HepG2 (cell line): ENCODE measurements at regions of chr1 and their contacts with region 1.

Region 1: DNA sequence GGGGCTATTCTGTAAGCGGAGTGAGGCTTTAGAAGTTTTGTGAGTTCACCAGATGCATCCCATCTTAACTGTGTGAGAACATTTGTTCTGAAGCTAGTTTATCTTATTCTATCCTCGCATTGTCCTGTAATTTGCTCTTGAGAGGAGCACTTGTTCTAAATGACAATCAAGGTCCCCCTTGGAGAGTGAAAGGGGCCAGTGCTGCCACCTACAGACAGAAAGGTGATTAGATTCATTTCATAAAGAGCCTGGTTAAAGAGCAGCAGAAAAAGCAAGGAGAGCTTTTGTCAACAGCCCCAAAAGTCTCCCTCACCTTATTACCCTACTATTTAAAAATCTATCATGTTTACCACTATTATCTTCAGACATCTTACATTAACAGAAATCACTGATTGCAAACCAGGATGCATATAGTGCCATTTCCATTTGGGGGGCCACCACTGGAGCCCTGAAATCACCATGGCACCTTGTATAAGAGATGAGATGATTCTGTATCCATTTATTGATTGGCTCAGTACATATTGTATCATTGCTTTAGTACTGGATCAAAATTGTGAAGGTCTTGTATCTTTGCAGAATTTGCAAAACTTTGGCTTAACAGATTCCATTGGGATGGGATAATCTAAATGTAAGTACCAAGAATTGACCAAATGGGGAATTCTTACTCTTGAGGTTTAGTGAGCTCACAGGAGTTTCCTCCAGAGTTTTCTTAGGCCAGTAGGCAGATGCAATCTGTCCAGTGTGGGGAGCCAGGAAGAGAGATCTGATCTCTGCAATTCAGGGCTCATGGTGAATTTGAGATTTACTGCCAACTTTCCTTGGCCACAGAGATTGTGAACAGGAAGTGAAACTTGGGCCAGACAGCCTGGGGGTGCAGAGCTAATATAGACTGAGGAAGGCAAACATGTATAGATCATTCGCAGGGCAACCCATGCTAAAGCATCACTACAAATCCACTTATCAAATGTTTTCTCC is 64.3 kb upstream of the TRABD2B start:
- DNase-seq: peak; percentile 40
- ATAC-seq: peak; percentile 74
- H3K4me3 ChIP-seq: no peak overlapping the region
- H3K27ac ChIP-seq: no peak overlapping the region
- H3K4me1 ChIP-seq: no peaks in the 10 kb centered on the region
- H3K27me3 ChIP-seq: no peaks in the 10 kb centered on the region
- CTCF ChIP-seq: peak; percentile 74
- EP300 ChIP-seq: no peak
- POLR2A ChIP-seq: no peak
- RAD21 ChIP-seq: 0 out of 2 replicates have a peak, but pooled peaks have one; percentile 22

Region 2: DNA sequence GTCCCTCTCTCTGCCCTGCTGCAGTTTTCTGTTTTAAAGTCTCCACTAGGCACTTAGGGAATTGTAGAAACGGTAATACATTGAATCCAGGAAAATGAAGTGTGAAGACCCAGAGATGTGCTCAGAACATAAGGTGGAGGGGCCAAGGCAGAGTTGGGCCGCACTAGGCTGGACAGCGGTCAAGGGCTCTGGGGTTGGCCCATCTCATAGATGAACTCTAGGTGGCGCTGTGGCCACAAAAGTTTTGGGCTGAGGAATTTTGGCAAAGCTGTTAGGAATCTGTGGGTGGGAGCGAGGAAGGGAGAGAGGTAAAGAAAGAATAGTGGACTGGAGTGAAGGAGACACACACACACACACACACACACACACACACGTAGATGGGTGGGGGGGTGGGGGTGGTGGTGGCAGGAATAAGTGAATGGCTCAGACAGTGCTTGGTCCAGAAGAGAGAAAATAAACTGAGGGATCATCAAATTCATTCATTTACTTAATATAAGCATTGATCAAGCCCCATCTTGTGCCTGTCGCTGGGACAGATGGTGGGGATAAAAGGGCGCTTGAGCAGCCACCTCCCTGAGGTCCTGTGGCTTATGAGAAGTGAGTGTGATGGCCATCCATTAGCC is 322.8 kb before region 1 on chr1:
- CTCF ChIA-PET with region 1: no interaction called
- POLR2A ChIA-PET with region 1: no interaction called
- in situ Hi-C with region 1: no loop called
- intact Hi-C with region 1: loop called (anchors 1 kb)
- DNase-seq: peak; percentile 35
- ATAC-seq: peak; percentile 93
- H3K4me3 ChIP-seq: no peak overlapping the region
- H3K27ac ChIP-seq: no peak overlapping the region
- H3K4me1 ChIP-seq: no peaks in the 10 kb centered on the region
- H3K27me3 ChIP-seq: peaks cover 3% of the 10 kb centered on the region in 2 experiments; a peak in 2 of 5 replicates
- CTCF ChIP-seq: peak; percentile 89
- EP300 ChIP-seq: no peak
- POLR2A ChIP-seq: no peak
- RAD21 ChIP-seq: peak; percentile 56

Region 3: GRCh38 chr1:47948126-47948525 is 113.3 kb before region 1 on chr1:
- CTCF ChIA-PET with region 1: interaction called, 5 read pairs
- POLR2A ChIA-PET with region 1: no interaction called
- in situ Hi-C with region 1: no loop called
- intact Hi-C with region 1: loop called (anchors 1 kb)
- DNase-seq: peak; percentile 51
- ATAC-seq: peak; percentile 91
- H3K4me3 ChIP-seq: no peak overlapping the region
- H3K27ac ChIP-seq: no peak overlapping the region
- H3K4me1 ChIP-seq: peaks cover 16% of the 10 kb centered on the region
- H3K27me3 ChIP-seq: peaks cover 3 to 17% of the 10 kb centered on the region in 2 experiments; a peak in 4 of 5 replicates
- CTCF ChIP-seq: peak; percentile 73
- EP300 ChIP-seq: no peak
- POLR2A ChIP-seq: no peak
- RAD21 ChIP-seq: peak; percentile 42; the same call in 1 of the 2 replicates

Region 4: DNA sequence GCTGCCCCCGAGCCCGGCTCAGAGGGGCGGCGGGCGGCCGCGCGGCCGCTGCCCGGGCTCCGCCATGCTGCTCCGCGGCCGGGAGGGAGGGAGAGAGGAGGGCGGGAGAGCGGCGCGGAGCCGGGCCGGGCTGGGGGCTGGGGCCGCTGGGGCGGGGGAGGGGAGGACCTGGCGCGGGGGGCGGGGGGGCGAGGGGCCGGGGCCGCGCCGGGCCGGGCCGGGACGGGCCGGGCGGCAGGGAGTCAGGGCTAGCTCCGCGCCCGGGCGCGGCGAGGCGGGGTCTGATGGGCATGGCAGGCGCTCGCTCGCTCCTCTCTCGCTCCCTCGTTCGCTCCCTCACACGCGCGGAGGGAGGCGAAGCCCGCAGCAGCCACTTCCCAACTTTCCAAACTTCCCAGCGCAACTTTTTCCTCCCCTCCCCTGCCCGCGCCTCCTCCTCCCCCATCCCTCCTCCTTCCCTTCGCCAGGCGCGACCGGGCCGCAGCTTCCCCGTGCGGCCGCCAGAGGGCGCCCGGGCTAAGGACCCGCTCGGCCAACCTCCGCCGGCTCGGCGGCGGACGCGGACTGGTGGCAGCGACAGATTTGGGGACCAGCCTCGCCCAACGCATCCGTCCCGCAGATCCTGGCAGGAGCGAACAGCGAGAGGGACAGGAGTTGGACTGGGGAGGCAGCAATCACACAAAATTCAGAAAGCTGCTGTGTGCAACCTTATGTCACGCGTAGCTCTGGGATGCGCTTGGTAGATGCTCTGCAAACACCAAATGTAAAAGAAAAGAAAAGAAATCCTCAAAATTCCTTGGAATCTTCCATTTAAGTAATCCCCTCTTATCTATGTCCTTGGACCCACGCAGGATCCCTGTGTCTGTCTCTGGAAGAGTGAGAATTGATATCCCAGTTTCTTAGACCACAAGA is 63.9 kb before region 1 on chr1 and contains the start of gene TRABD2B:
- CTCF ChIA-PET with region 1: no interaction called
- POLR2A ChIA-PET with region 1: no interaction called
- in situ Hi-C with region 1: no loop called
- intact Hi-C with region 1: loop called (anchors 1 kb)
- DNase-seq: peak; percentile 17
- ATAC-seq: peak; percentile 83
- H3K4me3 ChIP-seq: peak within 1 kb of the TSS; percentile 26 to 64 (median 58); a peak in 4 of 6 replicates
- H3K27ac ChIP-seq: no peak within 1 kb of the TSS
- H3K4me1 ChIP-seq: peaks cover 12% of the 10 kb centered on the region; the same call in 1 of the 2 replicates
- H3K27me3 ChIP-seq: peaks cover 8 to 61% of the 10 kb centered on the region in 2 experiments; a peak in 4 of 5 replicates
- CTCF ChIP-seq: peak; percentile 88
- EP300 ChIP-seq: no peak
- POLR2A ChIP-seq: no peak
- RAD21 ChIP-seq: peak; percentile 69
- total RNA-seq, gene TRABD2B: not detected in 2 replicates

Region 5: DNA sequence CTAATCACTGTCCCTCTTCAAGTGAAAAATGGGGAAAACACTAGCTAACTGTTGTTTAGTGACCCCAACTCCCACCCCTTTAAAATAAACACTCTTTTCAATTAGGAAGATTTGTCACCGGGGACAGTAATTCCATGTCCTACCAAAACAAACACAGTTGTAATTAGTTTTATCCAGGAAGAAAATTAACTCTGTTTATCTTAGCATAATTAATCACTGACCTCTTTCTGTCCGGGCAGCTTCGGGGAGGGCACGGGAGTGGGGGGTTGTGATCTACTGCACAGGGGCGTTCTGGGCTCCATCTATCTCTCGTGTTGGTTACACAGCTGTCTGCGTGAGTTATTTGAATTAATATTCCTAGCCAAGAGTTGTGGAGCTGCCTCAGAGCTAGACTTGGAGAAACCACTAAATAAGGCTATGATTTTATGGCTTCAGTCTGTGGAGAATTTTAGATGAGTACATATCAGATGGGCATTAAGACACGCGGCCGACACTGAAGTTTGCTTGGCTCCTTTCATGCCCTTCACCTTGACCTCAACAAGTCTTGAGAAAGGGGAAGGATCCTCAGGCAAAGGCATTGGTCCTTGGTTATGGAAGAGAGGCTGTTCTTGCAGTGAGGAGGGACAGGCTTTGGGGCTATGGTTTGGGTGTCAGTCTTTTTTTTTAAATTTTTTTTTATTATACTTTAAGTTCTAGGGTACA is 37.8 kb after region 1 on chr1:
- CTCF ChIA-PET with region 1: no interaction called
- POLR2A ChIA-PET with region 1: no interaction called
- in situ Hi-C with region 1: no loop called
- intact Hi-C with region 1: no loop called
- DNase-seq: no peak
- ATAC-seq: no peak
- H3K4me3 ChIP-seq: no peak overlapping the region
- H3K27ac ChIP-seq: no peak overlapping the region
- H3K4me1 ChIP-seq: peaks cover under 1% of the 10 kb centered on the region; the same call in 1 of the 2 replicates
- H3K27me3 ChIP-seq: peaks cover 0 to under 1% of the 10 kb centered on the region in 2 experiments; a peak in 1 of 5 replicates
- CTCF ChIP-seq: no peak
- EP300 ChIP-seq: no peak
- POLR2A ChIP-seq: no peak
- RAD21 ChIP-seq: no peak